ENCODE measurements at regions of chr3 and their contacts with region 1.

Region 1: GRCh38 chr3:52685709-52686691 is at the starts of genes GNL3 and PBRM1:
- DNase-seq: peak; percentile 94 to 96 (median 95)
- ATAC-seq: peak; percentile 87 to 95 (median 92)
- H3K4me3 ChIP-seq: peak within 1 kb of the TSS; percentile 55 to 91 (median 84)
- H3K27ac ChIP-seq: peak within 1 kb of the TSS; percentile 91 to 99 (median 98)
- H3K4me1 ChIP-seq: peaks cover 12 to 64% (median 42%) of the 10 kb centered on the region in 12 donors
- H3K27me3 ChIP-seq: no peaks in the 10 kb centered on the region
- CTCF ChIP-seq: no peak
- POLR2A ChIP-seq: peak in 1 of 2 donors; percentile 87
- total RNA-seq, gene GNL3: 23.6 to 47.4 (median 29.4) TPM
- total RNA-seq, gene PBRM1: 33.8 to 61.7 (median 49.5) TPM

Region 2: DNA sequence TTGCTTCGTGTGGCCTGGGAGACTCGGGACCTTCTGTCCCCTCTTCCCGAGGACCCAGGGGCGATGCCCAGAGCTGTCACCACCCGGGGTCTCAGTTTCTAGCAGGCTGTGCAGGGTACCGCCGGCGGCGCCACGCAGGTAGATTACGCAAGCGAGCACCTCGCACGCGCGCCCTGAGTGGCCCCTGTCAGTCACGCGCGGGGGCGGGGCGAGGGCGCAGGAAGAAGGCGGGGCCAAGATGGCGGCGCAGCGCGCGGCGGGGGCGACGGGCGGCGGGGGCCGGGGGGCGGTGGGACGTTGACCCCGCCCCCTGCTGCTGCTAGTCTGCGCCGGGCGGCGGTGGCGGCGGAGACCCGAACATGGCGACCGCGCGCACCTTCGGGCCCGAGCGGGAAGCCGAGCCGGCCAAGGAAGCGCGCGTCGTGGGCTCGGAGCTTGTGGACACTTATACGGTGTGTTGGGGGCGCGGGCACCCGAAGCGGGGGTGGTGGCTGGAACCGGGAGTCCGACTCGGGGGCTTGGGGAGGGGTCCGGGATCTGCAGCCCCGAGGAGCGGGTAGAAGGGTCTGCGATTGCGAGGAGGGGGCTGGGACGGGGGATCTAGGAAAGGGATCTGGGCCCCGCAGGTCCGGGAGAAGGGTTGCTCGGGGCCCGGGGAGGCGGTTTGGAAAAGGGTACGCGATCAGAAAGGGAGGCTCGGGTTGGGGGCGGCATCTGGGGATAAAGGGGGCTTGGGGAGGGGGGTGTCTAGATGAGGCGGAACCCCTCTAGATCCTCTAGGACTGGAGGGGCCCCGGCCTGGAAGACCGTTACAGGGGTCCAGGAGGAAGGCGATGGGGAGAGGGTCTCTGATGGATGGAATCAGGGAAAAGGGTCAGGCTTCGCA is 230.5 kb before region 1 on chr3 and contains the start of gene NISCH:
- intact Hi-C with region 1: loop called in 1 of 10 experiments (anchors 10 kb)
- DNase-seq: peak; percentile 92 to 96 (median 94)
- ATAC-seq: peak; percentile 13 to 59 (median 36)
- H3K4me3 ChIP-seq: peak within 1 kb of the TSS; percentile 57 to 92 (median 81)
- H3K27ac ChIP-seq: peak within 1 kb of the TSS; percentile 85 to 99 (median 94)
- H3K4me1 ChIP-seq: peaks cover 0 to 39% (median 23%) of the 10 kb centered on the region in 12 donors
- H3K27me3 ChIP-seq: no peaks in the 10 kb centered on the region
- CTCF ChIP-seq: peak in 1 of 12 donors; percentile 6
- POLR2A ChIP-seq: peak in 1 of 2 donors; percentile 66
- total RNA-seq, gene NISCH: 29.5 to 56.2 (median 43.9) TPM

Region 3: DNA sequence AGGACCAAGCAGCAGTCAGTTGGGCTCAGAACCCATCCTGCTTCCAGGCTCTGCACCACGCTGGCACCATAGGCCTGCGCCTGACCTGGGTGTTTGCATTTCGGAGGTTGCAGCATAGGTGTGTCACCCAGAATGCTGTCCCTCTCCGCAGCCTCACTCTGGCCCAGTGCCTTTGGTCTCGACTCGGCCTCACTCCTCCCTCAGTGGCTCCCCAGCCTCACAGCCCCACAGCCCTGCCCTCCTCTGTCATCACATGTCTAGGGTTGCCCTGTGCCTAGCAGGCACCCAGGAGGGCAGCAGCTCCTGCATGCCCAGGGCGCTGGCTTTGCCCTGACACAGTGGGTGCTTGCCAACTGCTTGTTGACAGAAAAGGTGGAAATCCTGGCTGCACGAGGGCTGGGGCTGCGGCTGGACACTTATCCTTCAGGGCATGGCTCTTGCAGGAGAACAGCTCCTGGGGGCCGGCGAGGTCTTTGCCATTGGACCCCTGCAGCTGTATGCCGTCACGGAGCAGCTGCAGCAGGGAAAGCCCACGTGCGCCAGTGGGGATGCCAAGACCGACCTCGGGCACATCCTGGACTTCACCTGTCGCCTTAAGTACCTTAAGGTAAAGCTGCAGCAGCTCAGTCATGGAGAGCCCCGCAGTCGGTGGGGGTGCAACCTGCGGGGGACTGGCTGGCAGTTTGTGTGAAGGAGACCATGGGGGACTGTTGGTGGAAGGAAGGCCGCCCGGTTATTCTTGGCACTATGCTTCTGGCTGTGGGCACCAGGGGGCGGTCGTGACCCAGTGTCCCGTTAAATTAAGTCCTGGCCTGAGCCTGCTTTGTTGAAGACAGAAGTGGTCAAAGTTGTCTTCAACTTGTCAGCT is 214.4 kb before region 1 on chr3:
- intact Hi-C with region 1: loop called in 8 of 10 experiments (anchors 5 to 10 kb)
- DNase-seq: peak; percentile 79 to 87 (median 82)
- ATAC-seq: peak; percentile 77 to 87 (median 82)
- H3K4me3 ChIP-seq: no peak overlapping the region
- H3K27ac ChIP-seq: peak overlapping the region in 4 of 12 donors; percentile 18 to 60 (median 48)
- H3K4me1 ChIP-seq: peaks cover 0 to 64% (median 29%) of the 10 kb centered on the region in 12 donors
- H3K27me3 ChIP-seq: no peaks in the 10 kb centered on the region
- CTCF ChIP-seq: peak; percentile 68 to 83 (median 78)
- POLR2A ChIP-seq: no peak

Region 4: GRCh38 chr3:52481819-52482521 is 204.0 kb before region 1 on chr3:
- intact Hi-C with region 1: loop called in 5 of 10 experiments (anchors 5 to 10 kb)
- DNase-seq: peak in 2 of 5 donors; percentile 40 to 60
- ATAC-seq: no peak
- H3K4me3 ChIP-seq: no peak overlapping the region
- H3K27ac ChIP-seq: no peak overlapping the region
- H3K4me1 ChIP-seq: peaks cover 5 to 37% (median 24%) of the 10 kb centered on the region in 12 donors
- H3K27me3 ChIP-seq: no peaks in the 10 kb centered on the region
- CTCF ChIP-seq: peak in 9 of 12 donors; percentile 17 to 47 (median 34)
- POLR2A ChIP-seq: no peak

Region 5: DNA sequence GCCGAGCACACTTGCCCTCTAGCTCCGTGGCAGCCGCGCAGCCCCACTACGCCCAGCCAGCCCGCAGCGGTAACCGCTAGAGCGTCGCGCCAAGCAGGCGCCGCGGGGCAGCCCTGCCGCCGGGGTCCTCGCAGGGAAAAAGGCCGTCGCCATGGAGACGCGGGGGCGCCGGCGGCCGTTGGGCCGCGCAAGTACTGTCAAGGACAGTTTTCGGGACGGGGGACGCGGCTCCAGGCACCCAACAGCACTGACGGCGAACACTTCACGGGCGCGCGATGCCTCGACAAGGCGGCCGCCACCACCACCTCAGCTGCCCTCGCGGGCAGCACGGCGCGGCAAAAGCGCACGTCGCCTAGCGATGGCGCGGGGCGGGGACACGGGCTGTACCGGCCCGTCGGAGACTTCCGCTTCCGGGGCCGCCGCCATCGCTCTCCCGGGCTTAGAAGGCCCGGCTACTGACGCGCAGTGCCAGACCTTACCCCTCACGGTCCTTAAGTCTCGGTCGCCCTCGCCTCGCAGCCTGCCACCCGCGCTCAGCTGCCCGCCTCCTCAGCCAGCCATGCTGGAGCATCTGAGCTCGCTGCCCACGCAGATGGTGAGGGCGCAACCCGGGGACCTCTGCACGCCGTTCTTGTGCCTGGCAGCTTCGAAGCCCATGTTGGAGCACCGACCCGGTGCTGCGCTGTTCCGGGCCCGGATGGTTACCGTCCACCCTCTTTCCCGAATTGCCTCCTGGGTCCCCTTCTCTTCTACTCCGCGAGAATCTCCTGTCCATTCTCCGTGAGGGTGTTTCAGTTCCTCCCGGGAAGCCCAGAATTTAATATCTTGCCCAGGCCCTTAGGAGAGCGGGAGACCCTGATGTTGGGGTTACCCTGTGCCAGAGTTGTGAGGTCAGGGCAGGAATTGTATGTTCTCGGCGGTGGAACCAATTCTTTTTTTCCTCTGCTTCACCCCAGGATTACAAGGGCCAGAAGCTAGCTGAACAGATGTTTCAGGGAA is 20.0 kb after region 1 on chr3 and contains the starts of genes GLT8D1 and SPCS1:
- intact Hi-C with region 1: loop called in 2 of 10 experiments (anchors 1 to 2 kb)
- DNase-seq: peak; percentile 87 to 92 (median 90)
- ATAC-seq: peak; percentile 93 to 97 (median 95)
- H3K4me3 ChIP-seq: peak within 1 kb of the TSS; percentile 67 to 100 (median 95)
- H3K27ac ChIP-seq: peak within 1 kb of the TSS; percentile 85 to 97 (median 91)
- H3K4me1 ChIP-seq: peaks cover 0 to 45% (median 32%) of the 10 kb centered on the region in 12 donors
- H3K27me3 ChIP-seq: no peaks in the 10 kb centered on the region
- CTCF ChIP-seq: no peak
- POLR2A ChIP-seq: peak; percentile 27 to 63
- total RNA-seq, gene GLT8D1: 22.6 to 38.7 (median 28.3) TPM
- total RNA-seq, gene SPCS1: 72.4 to 176 (median 80.2) TPM

Measured in heart left ventricle (tissue), 16 donors.